CD4-positive, alpha-beta memory T cell (primary cell): ENCODE measurements at regions of chr10 and their contacts with region 1.

Region 1: DNA sequence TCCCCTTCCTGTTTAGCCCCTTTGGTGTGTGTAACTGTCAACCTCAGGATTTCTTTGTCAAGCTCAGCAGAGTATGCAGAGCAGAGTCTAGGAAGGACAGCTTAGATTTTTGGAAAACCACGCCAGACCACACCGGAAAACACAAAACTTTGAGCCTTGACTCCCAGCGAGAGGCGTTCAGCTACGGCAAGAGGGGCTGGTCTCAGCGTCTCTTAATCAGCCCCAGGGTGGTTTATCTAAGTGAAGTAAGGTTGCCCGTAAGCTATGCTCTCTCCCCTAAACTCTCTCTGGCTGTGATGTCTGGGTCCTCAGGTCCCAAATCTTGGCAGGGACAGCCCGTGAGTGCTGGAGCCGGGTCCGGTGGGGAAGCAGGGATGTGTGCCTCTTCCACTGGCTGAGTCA is 230.9 kb downstream of the KLF6 start:
- DNase-seq: peak in 1 of 5 donors; percentile 2
- H3K4me3 ChIP-seq: no peak overlapping the region
- H3K4me3 Mint-ChIP-seq: peak overlapping the region in 6 of 8 donors; percentile 21 to 79 (median 66)
- H3K27ac ChIP-seq: no peak overlapping the region
- H3K27ac Mint-ChIP-seq: peak overlapping the region in 4 of 7 donors; percentile 36 to 79 (median 54)
- H3K4me1 ChIP-seq: peaks cover 7% of the 10 kb centered on the region
- H3K4me1 Mint-ChIP-seq: peaks cover 6 to 21% (median 14%) of the 10 kb centered on the region in 4 donors
- H3K27me3 ChIP-seq: no peaks in the 10 kb centered on the region
- H3K27me3 Mint-ChIP-seq: peaks cover 2 to 4% of the 10 kb centered on the region in 2 donors

Region 2: GRCh38 chr10:3452173-3452626 is 101.9 kb before region 1 on chr10:
- CTCF ChIA-PET with region 1: no interaction called
- POLR2A ChIA-PET with region 1: no interaction called
- intact Hi-C with region 1: no loop called
- DNase-seq: no peak
- H3K4me3 ChIP-seq: no peak overlapping the region
- H3K4me3 Mint-ChIP-seq: no peak overlapping the region
- H3K27ac ChIP-seq: no peak overlapping the region
- H3K27ac Mint-ChIP-seq: peak overlapping the region in 3 of 7 donors; percentile 19 to 67 (median 43)
- H3K4me1 ChIP-seq: peaks cover 10% of the 10 kb centered on the region
- H3K4me1 Mint-ChIP-seq: peaks cover 8 to 26% (median 9%) of the 10 kb centered on the region in 4 donors
- H3K27me3 ChIP-seq: no peaks in the 10 kb centered on the region
- H3K27me3 Mint-ChIP-seq: peaks cover 12 to 13% of the 10 kb centered on the region in 2 donors

Region 3: DNA sequence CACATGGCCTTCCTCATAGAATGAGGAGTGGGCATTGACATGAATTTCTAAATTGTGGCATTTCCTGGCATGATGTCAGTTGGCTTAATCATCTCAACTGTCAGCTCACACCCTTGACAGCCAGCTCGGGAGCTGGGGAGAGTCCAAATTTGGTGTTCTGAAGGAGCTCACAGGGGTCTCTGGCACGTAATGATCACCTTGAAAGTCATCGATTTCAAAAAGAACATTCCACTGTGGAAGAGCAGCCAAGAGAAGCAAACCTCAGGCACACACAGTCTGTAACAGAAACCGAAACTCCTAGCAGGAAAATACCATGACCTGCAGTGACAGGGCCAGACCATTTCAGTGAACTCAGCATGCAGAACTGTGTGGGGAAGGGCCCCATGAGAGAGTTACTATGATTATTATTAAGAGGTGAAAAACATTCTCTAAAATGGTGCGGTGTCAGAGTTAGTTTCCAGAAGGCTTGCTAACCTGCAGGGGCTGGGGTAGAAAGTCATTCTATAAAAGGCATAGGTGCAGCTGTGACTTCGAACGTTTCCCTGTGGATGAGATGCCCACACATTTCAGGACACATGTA is 257.3 kb after region 1 on chr10:
- CTCF ChIA-PET with region 1: no interaction called
- POLR2A ChIA-PET with region 1: no interaction called
- intact Hi-C with region 1: no loop called
- DNase-seq: peak; percentile 49 to 79 (median 66)
- H3K4me3 ChIP-seq: peak overlapping the region; percentile 1 to 39
- H3K4me3 Mint-ChIP-seq: peak overlapping the region; percentile 76 to 87 (median 82)
- H3K27ac ChIP-seq: peak overlapping the region; percentile 99
- H3K27ac Mint-ChIP-seq: no peak overlapping the region
- H3K4me1 ChIP-seq: peaks cover 79% of the 10 kb centered on the region
- H3K4me1 Mint-ChIP-seq: peaks cover 18 to 89% (median 66%) of the 10 kb centered on the region in 4 donors
- H3K27me3 ChIP-seq: no peaks in the 10 kb centered on the region
- H3K27me3 Mint-ChIP-seq: no peaks in the 10 kb centered on the region

Region 4: GRCh38 chr10:4384245-4384644 is 830.1 kb after region 1 on chr10:
- CTCF ChIA-PET with region 1: no interaction called
- POLR2A ChIA-PET with region 1: no interaction called
- intact Hi-C with region 1: loop called (anchors 10 kb)
- DNase-seq: no peak
- H3K4me3 ChIP-seq: no peak overlapping the region
- H3K4me3 Mint-ChIP-seq: no peak overlapping the region
- H3K27ac ChIP-seq: no peak overlapping the region
- H3K27ac Mint-ChIP-seq: no peak overlapping the region
- H3K4me1 ChIP-seq: no peaks in the 10 kb centered on the region
- H3K4me1 Mint-ChIP-seq: no peaks in the 10 kb centered on the region
- H3K27me3 ChIP-seq: no peaks in the 10 kb centered on the region
- H3K27me3 Mint-ChIP-seq: peaks cover 0 to 6% of the 10 kb centered on the region in 2 donors

Region 5: GRCh38 chr10:4981722-4982471 is 1427.8 kb after region 1 on chr10:
- CTCF ChIA-PET with region 1: no interaction called
- POLR2A ChIA-PET with region 1: no interaction called
- intact Hi-C with region 1: no loop called
- DNase-seq: peak in 2 of 5 donors; percentile 1 to 5
- H3K4me3 ChIP-seq: no peak overlapping the region
- H3K4me3 Mint-ChIP-seq: no peak overlapping the region
- H3K27ac ChIP-seq: no peak overlapping the region
- H3K27ac Mint-ChIP-seq: peak overlapping the region in 1 of 7 donors; percentile 19
- H3K4me1 ChIP-seq: no peaks in the 10 kb centered on the region
- H3K4me1 Mint-ChIP-seq: peaks cover 0 to 2% (median 0%) of the 10 kb centered on the region in 4 donors
- H3K27me3 ChIP-seq: no peaks in the 10 kb centered on the region
- H3K27me3 Mint-ChIP-seq: peaks cover 2 to 15% of the 10 kb centered on the region in 2 donors